ENCODE measurements at regions of chr22 and their contacts with region 1.

Region 1: DNA sequence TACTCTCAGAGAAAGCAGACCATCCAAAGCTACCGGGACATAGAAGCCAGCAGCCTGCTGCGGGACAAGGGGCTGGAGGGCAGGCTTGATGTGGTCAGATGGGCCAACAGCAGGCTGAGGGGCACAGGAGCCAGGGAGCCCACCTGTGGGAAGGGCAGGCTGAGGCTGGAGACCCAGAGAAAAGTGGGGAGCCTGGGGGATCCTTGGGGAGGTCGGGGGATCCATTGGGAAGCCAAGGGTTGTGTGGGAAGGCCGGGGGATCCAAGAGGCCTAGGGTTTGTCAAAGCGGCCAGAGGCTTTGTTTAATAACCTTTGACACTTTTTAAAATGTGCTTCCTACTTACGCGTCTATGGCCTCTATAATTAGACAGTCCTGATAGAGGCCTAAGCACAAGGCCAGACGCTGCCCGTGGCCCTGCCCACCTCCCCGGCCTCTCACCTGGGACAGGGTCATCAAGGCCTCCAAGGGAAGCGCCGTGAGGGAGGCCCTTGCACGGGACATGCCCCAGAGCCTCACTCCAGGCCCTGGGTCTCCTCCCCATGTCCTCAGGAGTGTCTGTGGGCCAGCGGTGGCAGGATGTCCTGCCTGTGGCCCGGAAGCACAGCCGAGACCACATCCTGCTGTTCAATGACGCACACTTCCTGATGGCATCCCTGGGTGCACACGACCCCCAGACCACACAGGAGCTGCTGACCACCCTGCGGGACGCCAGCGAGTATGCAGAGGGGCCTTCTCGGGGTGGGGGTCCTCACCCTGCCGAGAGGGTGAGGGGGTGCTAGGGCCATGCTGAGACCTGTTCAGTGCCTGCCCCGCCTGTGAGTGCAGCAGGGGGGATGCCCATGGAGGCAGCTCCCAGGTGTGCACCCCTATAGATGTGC is 8.6 kb upstream of the GTSE1 start:
- DNase-seq: peak; percentile 64 to 72
- ATAC-seq: peak; percentile 43 to 82 (median 72)
- H3K4me3 ChIP-seq: peak overlapping the region; percentile 33
- H3K4me3 Mint-ChIP-seq: peak overlapping the region; percentile 88
- H3K27ac ChIP-seq: peak overlapping the region; percentile 97
- H3K27ac Mint-ChIP-seq: peak overlapping the region; percentile 99
- H3K4me1 ChIP-seq: peaks cover 97% of the 10 kb centered on the region
- H3K4me1 Mint-ChIP-seq: peaks cover 69 to 84% of the 10 kb centered on the region in 2 donors
- H3K27me3 ChIP-seq: no peaks in the 10 kb centered on the region
- H3K27me3 Mint-ChIP-seq: no peaks in the 10 kb centered on the region
- CTCF ChIP-seq: no peak

Region 2: GRCh38 chr22:45309472-45310227 is 978.5 kb before region 1 on chr22 and contains the start of gene FAM118A:
- intact Hi-C with region 1: loop called (anchors 10 kb)
- DNase-seq: peak; percentile 96 to 100
- ATAC-seq: peak; percentile 89 to 96 (median 92)
- H3K4me3 ChIP-seq: peak within 1 kb of the TSS; percentile 64
- H3K4me3 Mint-ChIP-seq: peak within 1 kb of the TSS; percentile 86
- H3K27ac ChIP-seq: peak within 1 kb of the TSS; percentile 73
- H3K27ac Mint-ChIP-seq: peak within 1 kb of the TSS; percentile 82 to 89
- H3K4me1 ChIP-seq: peaks cover 28% of the 10 kb centered on the region
- H3K4me1 Mint-ChIP-seq: peaks cover 23 to 28% of the 10 kb centered on the region in 2 donors
- H3K27me3 ChIP-seq: no peaks in the 10 kb centered on the region
- H3K27me3 Mint-ChIP-seq: no peaks in the 10 kb centered on the region
- CTCF ChIP-seq: no peak
- total RNA-seq, gene FAM118A: 42.0 to 67.2 (median 62.6) TPM

Region 3: GRCh38 chr22:46057762-46058420 is 230.2 kb before region 1 on chr22:
- intact Hi-C with region 1: loop called (anchors 10 kb)
- DNase-seq: peak in 1 of 2 donors; percentile 64
- ATAC-seq: peak; percentile 73 to 77 (median 76)
- H3K4me3 ChIP-seq: no peak overlapping the region
- H3K4me3 Mint-ChIP-seq: peak overlapping the region; percentile 68
- H3K27ac ChIP-seq: peak overlapping the region; percentile 69
- H3K27ac Mint-ChIP-seq: peak overlapping the region; percentile 87 to 89
- H3K4me1 ChIP-seq: peaks cover 49% of the 10 kb centered on the region
- H3K4me1 Mint-ChIP-seq: peaks cover 39% of the 10 kb centered on the region in 2 donors
- H3K27me3 ChIP-seq: no peaks in the 10 kb centered on the region
- H3K27me3 Mint-ChIP-seq: no peaks in the 10 kb centered on the region
- CTCF ChIP-seq: no peak

Region 4: DNA sequence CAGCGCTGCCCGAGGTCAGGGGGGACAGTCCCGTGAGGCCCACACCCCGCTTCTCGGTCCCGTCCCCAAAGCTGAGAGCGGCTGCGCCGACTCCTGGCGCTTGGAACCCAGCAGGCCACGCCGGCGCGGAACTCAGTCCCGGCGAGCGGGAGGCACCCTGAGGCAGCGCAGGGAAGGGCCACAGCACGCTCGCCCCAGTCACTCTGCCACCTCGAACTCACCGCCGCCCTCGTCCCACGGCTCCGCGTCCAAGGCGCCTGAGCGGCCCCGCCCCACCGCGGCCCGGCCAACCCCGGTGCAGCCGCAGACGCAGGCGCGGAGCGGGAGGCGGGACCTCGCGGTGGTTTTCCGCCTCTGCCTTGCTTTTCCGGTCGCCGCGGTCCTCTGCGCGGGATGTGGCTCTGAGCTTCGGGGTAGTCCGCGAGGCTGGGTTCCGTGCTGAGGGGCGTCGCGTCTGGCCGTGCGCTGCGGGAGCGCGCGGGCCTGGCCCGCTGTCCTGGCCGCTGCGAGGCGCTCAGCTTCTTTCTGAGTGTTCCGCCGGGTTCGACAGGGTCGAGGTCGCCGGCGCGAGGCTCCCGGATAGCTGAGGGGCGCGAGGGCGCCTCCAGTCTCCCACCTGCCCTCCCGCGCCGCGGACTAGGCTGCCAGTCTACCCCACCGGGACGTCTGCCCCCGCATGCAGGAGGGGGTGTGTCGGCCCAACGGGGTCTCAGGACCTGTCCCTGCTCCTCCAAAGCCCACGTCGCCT is 37.9 kb before region 1 on chr22 and contains the start of gene CDPF1:
- intact Hi-C with region 1: loop called (anchors 2 kb)
- DNase-seq: peak; percentile 86 to 95
- ATAC-seq: peak; percentile 88 to 93 (median 92)
- H3K4me3 ChIP-seq: peak within 1 kb of the TSS; percentile 74
- H3K4me3 Mint-ChIP-seq: peak within 1 kb of the TSS; percentile 88
- H3K27ac ChIP-seq: peak within 1 kb of the TSS; percentile 66
- H3K27ac Mint-ChIP-seq: peak within 1 kb of the TSS; percentile 45 to 93
- H3K4me1 ChIP-seq: peaks cover 16% of the 10 kb centered on the region
- H3K4me1 Mint-ChIP-seq: peaks cover 21 to 44% of the 10 kb centered on the region in 2 donors
- H3K27me3 ChIP-seq: no peaks in the 10 kb centered on the region
- H3K27me3 Mint-ChIP-seq: no peaks in the 10 kb centered on the region
- CTCF ChIP-seq: no peak
- total RNA-seq, gene CDPF1: 5.0 to 11.4 (median 7.2) TPM

Region 5: GRCh38 chr22:46267431-46268279 is 20.5 kb before region 1 on chr22 and contains the start of gene TTC38:
- intact Hi-C with region 1: loop called (anchors 2 kb)
- DNase-seq: peak; percentile 57 to 63
- ATAC-seq: peak; percentile 83 to 86 (median 86)
- H3K4me3 ChIP-seq: peak within 1 kb of the TSS; percentile 61
- H3K4me3 Mint-ChIP-seq: peak within 1 kb of the TSS; percentile 95
- H3K27ac ChIP-seq: peak within 1 kb of the TSS; percentile 28
- H3K27ac Mint-ChIP-seq: peak within 1 kb of the TSS; percentile 82 to 88
- H3K4me1 ChIP-seq: peaks cover 48% of the 10 kb centered on the region
- H3K4me1 Mint-ChIP-seq: peaks cover 61 to 65% of the 10 kb centered on the region in 2 donors
- H3K27me3 ChIP-seq: no peaks in the 10 kb centered on the region
- H3K27me3 Mint-ChIP-seq: no peaks in the 10 kb centered on the region
- CTCF ChIP-seq: no peak
- total RNA-seq, gene TTC38: 251 to 313 (median 312) TPM

Region 6: DNA sequence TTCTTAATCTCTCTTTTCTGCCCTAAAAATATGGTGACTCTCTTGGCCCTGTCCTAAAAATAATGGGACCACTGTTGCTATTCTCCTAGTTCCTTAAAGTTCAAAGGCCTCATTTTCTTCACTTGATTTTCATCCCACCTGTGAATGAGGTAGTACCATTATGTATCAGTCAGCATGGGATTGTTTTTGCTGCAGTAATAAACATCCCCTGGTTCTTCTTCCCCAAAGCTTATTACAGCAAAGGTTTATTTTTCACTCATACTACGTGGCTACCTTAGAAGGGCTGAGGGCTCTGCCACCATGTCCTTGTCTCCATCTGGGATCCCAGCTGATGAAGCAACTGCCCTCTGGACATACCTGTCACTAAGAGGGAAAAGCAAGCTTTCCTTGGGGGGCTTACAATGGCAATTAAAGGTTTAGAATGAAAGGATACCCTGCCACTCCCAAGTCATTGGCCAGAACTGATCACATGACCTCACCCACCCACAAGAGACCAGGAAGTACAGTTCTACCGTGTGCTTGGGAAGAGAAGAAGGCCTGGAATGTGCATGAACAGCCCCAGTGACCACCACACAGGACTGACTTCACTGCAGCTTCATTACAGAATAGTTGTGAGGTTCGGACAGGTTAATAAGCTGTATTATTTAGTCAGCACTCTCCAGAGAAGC is 12.5 kb before region 1 on chr22:
- intact Hi-C with region 1: loop called (anchors 2 kb)
- DNase-seq: no peak
- ATAC-seq: no peak
- H3K4me3 ChIP-seq: no peak overlapping the region
- H3K4me3 Mint-ChIP-seq: peak overlapping the region; percentile 72
- H3K27ac ChIP-seq: peak overlapping the region; percentile 4
- H3K27ac Mint-ChIP-seq: peak overlapping the region; percentile 86
- H3K4me1 ChIP-seq: peaks cover 47% of the 10 kb centered on the region
- H3K4me1 Mint-ChIP-seq: peaks cover 46 to 49% of the 10 kb centered on the region in 2 donors
- H3K27me3 ChIP-seq: no peaks in the 10 kb centered on the region
- H3K27me3 Mint-ChIP-seq: no peaks in the 10 kb centered on the region
- CTCF ChIP-seq: no peak

Region 7: DNA sequence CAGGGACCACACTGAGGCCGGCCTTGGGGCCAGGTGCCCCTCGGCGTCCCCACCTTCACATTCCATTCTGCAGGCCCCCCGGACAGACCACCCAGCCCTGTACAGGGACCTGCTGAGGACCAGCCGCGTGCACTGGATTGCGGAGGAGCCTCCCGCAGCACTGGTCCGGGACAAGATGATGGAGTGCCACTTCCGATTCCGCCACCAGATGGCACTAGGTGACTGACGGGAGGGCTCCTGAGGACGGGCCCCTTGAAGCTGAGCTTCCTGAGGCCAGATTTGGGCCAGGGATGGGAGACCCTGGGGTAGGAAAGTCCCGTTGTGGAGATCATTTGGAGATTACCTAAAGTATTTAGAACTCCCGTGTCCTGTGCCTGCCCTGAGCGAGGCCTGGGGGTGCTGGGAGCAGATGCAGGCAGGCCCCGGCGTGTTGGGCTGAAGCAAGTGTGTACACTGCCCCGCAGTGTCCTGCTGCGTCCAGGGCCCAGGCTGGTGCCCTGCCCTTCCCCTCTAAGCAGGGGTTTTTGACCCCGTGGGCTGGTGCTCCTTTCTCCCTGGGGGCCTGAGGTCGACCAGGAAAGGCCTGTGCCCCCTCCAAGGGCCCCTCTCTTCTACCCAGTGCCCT is 67.4 kb after region 1 on chr22:
- intact Hi-C with region 1: no loop called
- DNase-seq: peak; percentile 70 to 80
- ATAC-seq: peak in 2 of 3 donors; percentile 82 to 84
- H3K4me3 ChIP-seq: no peak overlapping the region
- H3K4me3 Mint-ChIP-seq: no peak overlapping the region
- H3K27ac ChIP-seq: no peak overlapping the region
- H3K27ac Mint-ChIP-seq: no peak overlapping the region
- H3K4me1 ChIP-seq: peaks cover 9% of the 10 kb centered on the region
- H3K4me1 Mint-ChIP-seq: peaks cover 5 to 7% of the 10 kb centered on the region in 2 donors
- H3K27me3 ChIP-seq: no peaks in the 10 kb centered on the region
- H3K27me3 Mint-ChIP-seq: no peaks in the 10 kb centered on the region
- CTCF ChIP-seq: peak; percentile 74